IMR-90 (cell line): ENCODE measurements at regions of chr9 and their contacts with region 1.

Region 1: GRCh38 chr9:20622330-20623020 is at the start of gene MLLT3:
- DNase-seq: peak; percentile 95
- ATAC-seq: peak; percentile 92
- H3K4me3 ChIP-seq: peak within 1 kb of the TSS; percentile 93
- H3K27ac ChIP-seq: peak within 1 kb of the TSS; percentile 91
- H3K4me1 ChIP-seq: peaks cover 6% of the 10 kb centered on the region
- H3K27me3 ChIP-seq: no peaks in the 10 kb centered on the region
- CTCF ChIP-seq: no peak
- POLR2A ChIP-seq: no peak
- RAD21 ChIP-seq: no peak; the same call in 1 of the 2 replicates
- total RNA-seq, gene MLLT3: 21.1 and 24.4 TPM in 2 replicates

Region 2: DNA sequence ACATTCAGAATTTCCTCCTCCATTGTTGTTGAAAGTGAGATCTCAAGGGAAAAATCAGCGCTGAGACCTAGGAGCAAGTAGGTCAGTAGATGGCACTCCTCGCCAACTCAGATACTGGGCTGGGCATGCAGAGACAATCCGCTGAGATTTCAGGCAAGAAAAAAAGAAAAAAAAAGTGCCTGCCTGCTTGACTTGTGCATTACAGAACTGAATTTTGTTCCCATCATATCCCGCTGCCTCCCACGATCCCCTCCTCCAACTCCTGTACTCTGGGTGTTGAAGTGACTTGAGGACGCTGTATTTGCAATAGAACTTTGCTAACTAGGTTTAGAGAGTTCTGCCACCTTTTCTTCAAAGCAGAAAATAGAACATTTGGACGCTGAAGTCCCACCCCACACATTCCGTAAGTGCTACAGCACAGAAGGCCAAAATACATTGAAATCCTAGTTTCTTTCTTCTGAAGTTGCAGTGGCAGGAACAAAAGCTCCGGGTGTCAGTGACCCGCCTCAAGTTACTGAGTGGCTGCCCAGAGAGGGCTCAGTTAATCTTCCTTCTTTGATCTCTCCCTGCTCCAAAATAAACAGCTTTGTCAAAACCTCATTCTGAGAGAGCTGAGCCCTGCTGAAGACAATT is 266.0 kb before region 1 on chr9:
- CTCF ChIA-PET with region 1: interaction called, 4 read pairs
- POLR2A ChIA-PET with region 1: no interaction called
- dilution Hi-C with region 1: no loop called
- in situ Hi-C with region 1: loop called (anchors 5 kb)
- intact Hi-C with region 1: loop called (anchors 1 kb)
- DNase-seq: peak; percentile 86
- ATAC-seq: peak; percentile 70
- H3K4me3 ChIP-seq: no peak overlapping the region
- H3K27ac ChIP-seq: peak overlapping the region; percentile 9; the same call in 1 of the 2 replicates
- H3K4me1 ChIP-seq: peaks cover 21% of the 10 kb centered on the region
- H3K27me3 ChIP-seq: no peaks in the 10 kb centered on the region
- CTCF ChIP-seq: peak; percentile 83
- POLR2A ChIP-seq: no peak
- RAD21 ChIP-seq: peak; percentile 89

Region 3: GRCh38 chr9:20552874-20553575 is 69.5 kb before region 1 on chr9:
- CTCF ChIA-PET with region 1: interaction called, 3 read pairs
- POLR2A ChIA-PET with region 1: no interaction called
- dilution Hi-C with region 1: no loop called
- in situ Hi-C with region 1: no loop called
- intact Hi-C with region 1: loop called (anchors 2 kb)
- DNase-seq: peak; percentile 25
- ATAC-seq: peak; percentile 46
- H3K4me3 ChIP-seq: no peak overlapping the region
- H3K27ac ChIP-seq: no peak overlapping the region
- H3K4me1 ChIP-seq: peaks cover 7% of the 10 kb centered on the region
- H3K27me3 ChIP-seq: no peaks in the 10 kb centered on the region
- CTCF ChIP-seq: peak; percentile 36
- POLR2A ChIP-seq: no peak
- RAD21 ChIP-seq: no peak

Region 4: DNA sequence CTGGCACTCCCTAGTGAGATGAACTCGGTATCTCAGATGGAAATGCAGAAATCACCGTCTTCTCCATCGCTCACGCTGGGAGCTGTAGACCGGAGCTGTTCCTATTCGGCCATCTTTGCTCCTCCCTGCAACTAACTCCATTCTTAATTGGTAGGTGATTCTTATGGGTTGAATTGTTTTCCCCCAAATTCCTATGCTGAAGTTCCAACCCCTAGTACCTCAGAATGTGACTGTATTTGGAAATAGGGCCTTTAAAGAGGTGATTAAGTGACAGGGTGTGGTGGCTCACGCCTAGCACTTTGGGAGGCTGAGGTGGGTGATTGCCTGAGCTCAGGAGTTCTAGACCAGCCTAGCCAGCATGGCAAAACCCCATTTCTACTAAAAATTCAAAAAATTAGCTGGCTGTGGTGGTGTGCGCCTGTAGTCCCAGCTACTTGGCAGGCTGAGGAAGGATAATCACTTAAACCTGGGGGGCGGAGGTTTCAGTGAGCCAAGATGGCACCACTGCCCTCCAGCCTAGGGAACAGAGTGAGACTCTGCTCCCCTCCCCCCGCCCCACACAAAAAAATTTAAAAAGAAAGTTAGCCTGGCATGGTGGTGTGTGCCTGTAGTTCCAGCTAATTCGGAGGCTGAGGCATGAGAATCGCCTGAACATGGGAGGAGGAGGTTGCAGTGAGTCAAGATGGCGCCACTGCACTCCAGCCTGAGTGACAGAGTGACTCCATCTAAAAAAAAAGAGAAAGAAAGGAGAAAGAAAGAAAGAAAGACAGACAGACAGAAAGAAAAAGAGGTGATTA is 36.4 kb after region 1 on chr9:
- CTCF ChIA-PET with region 1: no interaction called
- POLR2A ChIA-PET with region 1: interaction called, 16 read pairs
- dilution Hi-C with region 1: no loop called
- in situ Hi-C with region 1: no loop called
- intact Hi-C with region 1: no loop called
- DNase-seq: no peak
- ATAC-seq: peak; percentile 42
- H3K4me3 ChIP-seq: peak overlapping the region; percentile 61
- H3K27ac ChIP-seq: no peak overlapping the region
- H3K4me1 ChIP-seq: no peaks in the 10 kb centered on the region
- H3K27me3 ChIP-seq: no peaks in the 10 kb centered on the region; the same call in 1 of the 2 replicates
- CTCF ChIP-seq: no peak
- POLR2A ChIP-seq: no peak
- RAD21 ChIP-seq: no peak

Region 5: DNA sequence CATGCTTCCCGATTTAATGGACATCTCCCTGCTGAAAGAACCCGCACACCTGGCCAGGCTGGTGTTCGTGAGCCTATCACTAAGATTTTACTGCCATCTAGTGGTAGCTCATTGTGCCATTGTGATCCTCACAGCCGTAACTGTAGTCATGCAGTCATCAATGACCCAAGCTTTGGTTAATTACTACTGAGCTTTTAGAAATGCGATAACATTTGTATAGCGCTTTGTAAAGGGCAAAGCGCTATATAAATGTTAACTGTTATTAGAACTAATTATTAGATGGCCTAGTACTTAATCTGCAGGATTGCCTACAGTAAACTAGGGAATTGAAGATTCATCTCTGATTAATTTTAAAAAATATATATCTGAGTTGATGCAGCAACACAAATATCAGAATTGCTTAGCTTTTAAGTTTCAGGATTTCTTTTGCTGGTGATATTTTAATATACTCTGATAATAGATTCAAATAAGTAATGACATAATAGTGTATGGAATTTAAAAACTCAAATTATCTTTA is 318.8 kb after region 1 on chr9:
- CTCF ChIA-PET with region 1: interaction called, 15 read pairs
- POLR2A ChIA-PET with region 1: no interaction called
- dilution Hi-C with region 1: no loop called
- in situ Hi-C with region 1: loop called (anchors 5 kb)
- intact Hi-C with region 1: loop called (anchors 1 kb)
- DNase-seq: peak; percentile 71
- ATAC-seq: peak; percentile 95
- H3K4me3 ChIP-seq: no peak overlapping the region
- H3K27ac ChIP-seq: no peak overlapping the region
- H3K4me1 ChIP-seq: no peaks in the 10 kb centered on the region
- H3K27me3 ChIP-seq: no peaks in the 10 kb centered on the region
- CTCF ChIP-seq: peak; percentile 88
- POLR2A ChIP-seq: no peak
- RAD21 ChIP-seq: peak; percentile 91

Region 6: GRCh38 chr9:21104787-21105186 is 482.3 kb after region 1 on chr9:
- CTCF ChIA-PET with region 1: interaction called, 14 read pairs
- POLR2A ChIA-PET with region 1: no interaction called
- dilution Hi-C with region 1: no loop called
- in situ Hi-C with region 1: loop called (anchors 5 kb)
- intact Hi-C with region 1: no loop called
- DNase-seq: no peak
- ATAC-seq: no peak
- H3K4me3 ChIP-seq: no peak overlapping the region
- H3K27ac ChIP-seq: no peak overlapping the region
- H3K4me1 ChIP-seq: no peaks in the 10 kb centered on the region
- H3K27me3 ChIP-seq: no peaks in the 10 kb centered on the region
- CTCF ChIP-seq: no peak
- POLR2A ChIP-seq: no peak
- RAD21 ChIP-seq: no peak